PC-9 (cell line): ENCODE measurements at regions of chr16 and their contacts with region 1.

Region 1: DNA sequence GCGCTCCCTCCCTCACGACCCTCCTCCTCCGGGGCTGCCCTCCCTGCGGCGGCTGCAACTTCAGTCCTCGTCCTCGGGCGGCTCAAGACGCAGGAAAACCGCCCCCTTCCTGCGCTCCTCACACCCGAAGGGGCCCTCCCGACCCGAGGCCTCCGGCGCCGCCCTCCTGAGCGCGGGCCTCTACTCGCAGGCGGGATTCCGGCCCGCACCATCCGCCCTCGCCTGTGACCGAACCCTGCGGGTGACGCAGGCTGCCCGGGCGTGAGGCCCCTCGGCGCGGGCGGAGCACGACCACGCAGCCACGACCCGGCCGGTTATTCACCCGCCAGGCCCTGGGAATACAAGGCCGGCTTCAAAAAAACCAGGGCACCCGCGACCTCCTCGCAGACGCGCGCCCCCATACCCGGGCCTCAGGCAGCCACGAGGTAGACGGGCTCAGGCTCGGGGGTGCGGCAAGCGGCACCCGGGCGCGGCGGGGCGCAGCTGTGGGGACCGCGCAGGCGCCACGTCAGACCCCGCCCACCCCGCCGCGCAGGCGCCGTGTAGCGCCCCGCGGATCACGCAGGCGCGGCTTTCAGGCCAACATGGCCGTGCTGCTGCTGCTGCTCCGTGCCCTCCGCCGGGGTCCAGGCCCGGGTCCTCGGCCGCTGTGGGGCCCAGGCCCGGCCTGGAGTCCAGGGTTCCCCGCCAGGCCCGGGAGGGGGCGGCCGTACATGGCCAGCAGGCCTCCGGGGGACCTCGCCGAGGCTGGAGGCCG is at the start of gene SPG7:
- DNase-seq: peak; percentile 64 to 95
- H3K4me3 ChIP-seq: peak within 1 kb of the TSS; percentile 84
- H3K27ac ChIP-seq: peak within 1 kb of the TSS; percentile 60
- H3K4me1 ChIP-seq: peaks cover 49% of the 10 kb centered on the region
- H3K27me3 ChIP-seq: no peaks in the 10 kb centered on the region
- CTCF ChIP-seq: no peak
- total RNA-seq, gene SPG7: 160 and 198 TPM in 2 replicates

Region 2: DNA sequence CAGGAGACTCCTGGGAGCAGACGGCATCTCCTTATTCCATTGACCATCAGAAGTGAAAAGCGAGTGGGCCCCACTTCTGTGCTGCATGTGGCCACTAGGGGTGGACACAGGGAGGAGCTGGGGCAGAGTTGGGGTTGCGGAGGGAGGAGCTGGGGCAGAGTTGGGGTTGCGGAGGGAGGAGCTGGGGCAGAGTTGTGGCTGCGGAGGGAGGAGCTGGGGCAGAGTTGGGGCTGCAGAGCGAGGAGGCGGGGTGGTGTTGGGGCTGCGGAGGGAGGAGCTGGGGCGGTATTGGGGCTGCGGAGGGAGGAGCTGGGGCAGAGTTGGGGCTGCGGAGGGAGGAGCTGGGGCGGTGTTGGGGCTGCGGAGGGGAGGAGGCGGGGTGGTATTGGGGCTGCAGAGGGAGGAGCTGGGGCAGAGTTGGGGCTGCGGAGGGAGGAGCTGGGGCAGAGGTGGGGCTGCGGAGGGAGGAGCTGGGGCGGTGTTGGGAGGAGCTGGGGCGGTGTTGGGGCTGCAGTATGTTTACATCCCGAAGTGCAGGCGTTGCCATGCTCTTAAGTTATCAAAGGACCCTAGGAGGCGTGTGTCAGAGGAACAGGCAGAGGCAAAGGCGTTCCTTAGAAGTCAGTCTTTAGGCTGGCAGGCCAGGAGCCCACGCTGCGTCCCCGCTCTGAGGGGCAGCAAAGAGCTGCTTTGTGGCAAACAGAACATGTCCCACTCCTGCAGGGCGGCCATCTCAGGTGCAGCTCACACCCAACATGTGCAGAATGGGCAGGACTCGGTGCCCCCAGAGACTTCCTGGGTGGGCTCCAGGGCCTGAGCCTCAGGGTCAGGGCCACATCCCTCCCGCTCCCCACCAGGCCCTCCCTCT is 214.5 kb before region 1 on chr16:
- CTCF ChIA-PET with region 1: interaction called, 14 read pairs
- POLR2A ChIA-PET with region 1: no interaction called
- intact Hi-C with region 1: no loop called
- DNase-seq: no peak
- H3K4me3 ChIP-seq: no peak overlapping the region
- H3K27ac ChIP-seq: no peak overlapping the region
- H3K4me1 ChIP-seq: peaks cover 9% of the 10 kb centered on the region
- H3K27me3 ChIP-seq: no peaks in the 10 kb centered on the region
- CTCF ChIP-seq: no peak

Region 3: GRCh38 chr16:89300976-89301360 is 207.0 kb before region 1 on chr16:
- CTCF ChIA-PET with region 1: no interaction called
- POLR2A ChIA-PET with region 1: no interaction called
- intact Hi-C with region 1: loop called (anchors 1 kb)
- DNase-seq: no peak
- H3K4me3 ChIP-seq: no peak overlapping the region
- H3K27ac ChIP-seq: no peak overlapping the region
- H3K4me1 ChIP-seq: peaks cover 15% of the 10 kb centered on the region
- H3K27me3 ChIP-seq: no peaks in the 10 kb centered on the region
- CTCF ChIP-seq: no peak

Region 4: DNA sequence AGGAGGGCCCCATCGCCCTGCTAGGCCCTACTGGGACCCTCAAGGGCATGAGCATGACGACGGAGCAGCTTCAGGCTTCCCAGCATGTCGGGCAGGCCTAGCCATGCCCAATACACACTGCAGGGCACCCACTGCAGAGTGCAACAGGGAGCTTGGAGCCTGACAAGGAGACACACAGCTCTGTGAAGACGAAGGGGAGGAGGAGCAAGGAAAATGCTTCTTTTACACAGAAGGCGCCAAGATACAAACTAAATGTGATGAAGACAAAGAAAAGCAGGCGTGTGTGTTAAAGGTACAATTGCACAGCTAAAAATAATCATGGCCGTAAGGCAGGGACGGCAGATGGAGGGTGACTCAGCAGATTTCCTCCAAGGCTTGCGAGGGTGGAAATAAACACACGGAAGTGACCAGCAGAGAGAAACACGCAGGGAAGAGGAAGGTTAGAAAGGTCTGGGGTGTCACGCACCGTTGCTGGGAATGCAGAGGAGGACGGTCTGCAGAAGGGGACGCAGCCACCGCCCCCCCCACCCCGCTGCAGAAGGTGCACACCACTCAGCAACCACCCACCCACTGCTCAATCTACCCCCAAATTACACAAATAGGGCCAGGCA is 182.0 kb before region 1 on chr16:
- CTCF ChIA-PET with region 1: no interaction called
- POLR2A ChIA-PET with region 1: no interaction called
- intact Hi-C with region 1: loop called (anchors 2 kb)
- DNase-seq: peak; percentile 61 to 64
- H3K4me3 ChIP-seq: no peak overlapping the region; the same call in 1 of the 2 replicates
- H3K27ac ChIP-seq: peak overlapping the region; percentile 86
- H3K4me1 ChIP-seq: peaks cover 95% of the 10 kb centered on the region
- H3K27me3 ChIP-seq: no peaks in the 10 kb centered on the region
- CTCF ChIP-seq: no peak

Region 5: GRCh38 chr16:89383082-89384003 is 124.7 kb before region 1 on chr16:
- CTCF ChIA-PET with region 1: no interaction called
- POLR2A ChIA-PET with region 1: no interaction called
- intact Hi-C with region 1: no loop called
- DNase-seq: peak; percentile 82 to 93
- H3K4me3 ChIP-seq: no peak overlapping the region
- H3K27ac ChIP-seq: peak overlapping the region; percentile 83
- H3K4me1 ChIP-seq: peaks cover 25% of the 10 kb centered on the region
- H3K27me3 ChIP-seq: no peaks in the 10 kb centered on the region
- CTCF ChIP-seq: no peak; the same call in 1 of the 2 replicates

Region 6: DNA sequence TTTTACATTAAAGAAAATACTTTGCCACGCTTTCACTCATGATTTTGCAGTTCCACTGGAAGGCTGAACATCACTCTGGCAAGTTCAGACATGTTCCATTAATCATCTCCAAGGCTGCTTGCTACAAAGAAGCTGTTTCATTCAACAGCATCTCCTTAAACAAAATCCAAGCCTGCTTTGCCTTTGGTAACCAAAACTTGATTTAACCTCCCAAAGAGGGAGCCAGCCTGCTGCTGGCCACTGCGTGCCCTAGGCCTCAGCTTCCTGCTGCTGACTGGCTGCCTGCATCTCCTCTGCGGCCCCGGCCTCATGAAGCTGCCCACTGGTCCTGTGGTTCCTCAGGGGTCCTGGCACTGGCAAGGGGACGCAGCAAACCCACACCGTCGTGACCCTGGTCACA is 49.5 kb before region 1 on chr16:
- CTCF ChIA-PET with region 1: interaction called, 18 read pairs
- POLR2A ChIA-PET with region 1: no interaction called
- intact Hi-C with region 1: no loop called
- DNase-seq: no peak
- H3K4me3 ChIP-seq: no peak overlapping the region
- H3K27ac ChIP-seq: no peak overlapping the region
- H3K4me1 ChIP-seq: no peaks in the 10 kb centered on the region
- H3K27me3 ChIP-seq: no peaks in the 10 kb centered on the region
- CTCF ChIP-seq: no peak

Region 7: GRCh38 chr16:89490387-89491237 is 17.4 kb before region 1 on chr16 and contains the start of gene ANKRD11:
- CTCF ChIA-PET with region 1: interaction called, 18 read pairs
- POLR2A ChIA-PET with region 1: interaction called, 3 read pairs
- intact Hi-C with region 1: no loop called
- DNase-seq: peak; percentile 98 to 100
- H3K4me3 ChIP-seq: peak within 1 kb of the TSS; percentile 91
- H3K27ac ChIP-seq: peak within 1 kb of the TSS; percentile 53
- H3K4me1 ChIP-seq: peaks cover 30% of the 10 kb centered on the region
- H3K27me3 ChIP-seq: no peaks in the 10 kb centered on the region
- CTCF ChIP-seq: no peak
- total RNA-seq, gene ANKRD11: 206 and 220 TPM in 2 replicates

Region 8: DNA sequence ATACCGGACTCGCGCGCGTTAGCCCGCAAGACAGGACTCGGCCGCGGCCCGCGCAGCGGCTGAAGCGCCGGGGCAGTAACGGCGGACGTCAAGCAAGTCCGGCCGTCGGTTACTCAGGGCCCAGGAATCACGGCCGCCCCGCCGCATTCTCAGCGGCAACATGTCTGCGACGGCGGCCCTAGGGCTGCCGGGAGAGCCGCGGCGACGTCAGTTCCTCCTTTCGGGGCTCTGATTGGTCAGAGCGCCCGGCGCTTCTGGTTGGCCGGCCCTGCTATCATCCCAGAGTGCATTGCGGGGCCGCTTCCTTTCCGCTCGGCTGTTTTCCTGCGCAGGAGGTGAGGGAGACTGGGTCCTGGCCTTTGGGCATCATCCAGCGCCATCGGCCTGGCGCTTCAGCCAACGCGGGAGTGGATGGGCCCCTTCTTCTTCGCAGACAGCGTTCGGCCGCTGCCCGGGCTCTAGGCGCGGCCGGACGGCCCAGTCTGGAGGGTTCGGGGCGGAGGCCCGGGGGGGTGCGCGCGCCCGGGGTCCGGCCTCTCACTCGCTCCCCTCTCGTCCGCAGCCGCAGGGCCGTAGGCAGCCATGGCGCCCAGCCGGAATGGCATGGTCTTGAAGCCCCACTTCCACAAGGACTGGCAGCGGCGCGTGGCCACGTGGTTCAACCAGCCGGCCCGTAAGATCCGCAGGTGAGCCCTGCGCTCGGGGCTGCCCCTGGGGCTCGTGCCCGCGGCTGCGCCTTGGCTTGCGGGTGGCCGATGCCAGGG is 52.5 kb after region 1 on chr16 and contains the start of gene RPL13:
- CTCF ChIA-PET with region 1: no interaction called
- POLR2A ChIA-PET with region 1: interaction called, 3 read pairs
- intact Hi-C with region 1: loop called (anchors 5 kb)
- DNase-seq: peak; percentile 91 to 95
- H3K4me3 ChIP-seq: peak within 1 kb of the TSS; percentile 92
- H3K27ac ChIP-seq: peak within 1 kb of the TSS; percentile 96
- H3K4me1 ChIP-seq: peaks cover 49% of the 10 kb centered on the region
- H3K27me3 ChIP-seq: no peaks in the 10 kb centered on the region
- CTCF ChIP-seq: no peak
- total RNA-seq, gene RPL13: 2,045 and 3,124 TPM in 2 replicates